ENCODE measurements at regions of chr14 and their contacts with region 1.

Region 1: GRCh38 chr14:81220830-81221578 is at the start of gene GTF2A1:
- DNase-seq: peak; percentile 89 to 94
- H3K4me3 ChIP-seq: peak within 1 kb of the TSS; percentile 90 to 98 (median 94)
- H3K27ac ChIP-seq: peak within 1 kb of the TSS; percentile 99
- H3K4me1 ChIP-seq: peaks cover 0 to 5% (median 0%) of the 10 kb centered on the region in 4 experiments; a peak in 4 of 7 replicates
- H3K27me3 ChIP-seq: no peaks in the 10 kb centered on the region
- CTCF ChIP-seq: no peak
- EP300 ChIP-seq: peak in 1 of 2 experiments; percentile 59; a peak in 1 of 3 replicates
- POLR2A ChIP-seq: peak; percentile 92 to 99
- RAD21 ChIP-seq: no peak
- total RNA-seq, gene GTF2A1: 53.5 and 57.8 TPM in 2 replicates

Region 2: DNA sequence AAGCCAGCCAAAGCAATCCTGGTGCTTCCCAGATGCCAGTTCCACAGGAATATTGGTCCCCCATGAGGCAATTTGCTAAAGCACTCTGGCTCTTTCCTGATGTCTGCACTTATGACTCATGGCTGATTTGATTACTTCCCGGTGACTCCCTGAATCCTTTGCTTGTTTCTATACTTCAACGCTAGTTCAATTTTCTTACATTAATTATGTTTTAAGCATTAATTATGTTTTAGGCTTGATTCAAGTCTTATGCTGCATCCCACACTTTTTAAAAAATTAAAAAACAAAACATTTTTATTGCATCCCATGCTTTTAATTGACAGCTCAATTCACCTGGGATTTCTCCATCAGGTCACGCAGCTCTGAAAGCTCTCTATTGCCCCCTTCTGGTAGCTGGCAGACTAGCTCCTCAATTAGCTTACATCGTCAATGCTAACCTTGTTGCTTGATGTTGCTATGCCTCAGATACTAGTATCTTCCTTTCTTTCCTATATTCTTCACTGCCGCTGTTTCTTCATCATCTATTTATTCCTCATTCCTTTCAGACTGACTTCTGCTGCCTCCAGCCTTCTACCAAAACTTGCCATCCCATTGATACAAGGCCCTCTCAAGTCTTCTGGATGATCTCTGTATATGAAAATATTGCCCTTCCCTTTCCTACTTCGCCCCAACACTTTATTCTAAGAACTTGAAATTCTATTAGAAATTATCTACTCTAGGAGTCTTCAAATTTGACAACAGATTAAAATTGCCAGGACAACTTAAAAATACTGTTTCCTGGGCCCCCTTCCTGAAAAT is 233.6 kb before region 1 on chr14:
- CTCF ChIA-PET with region 1: no interaction called
- POLR2A ChIA-PET with region 1: no interaction called
- DNase-seq: peak; percentile 51 to 77
- H3K4me3 ChIP-seq: no peak overlapping the region
- H3K27ac ChIP-seq: no peak overlapping the region
- H3K4me1 ChIP-seq: no peaks in the 10 kb centered on the region
- H3K27me3 ChIP-seq: no peaks in the 10 kb centered on the region
- CTCF ChIP-seq: peak; percentile 28 to 87 (median 80)
- EP300 ChIP-seq: no peak
- POLR2A ChIP-seq: no peak
- RAD21 ChIP-seq: peak; percentile 82 to 86

Region 3: GRCh38 chr14:81001447-81001846 is 219.6 kb before region 1 on chr14:
- CTCF ChIA-PET with region 1: no interaction called
- POLR2A ChIA-PET with region 1: no interaction called
- DNase-seq: no peak
- H3K4me3 ChIP-seq: no peak overlapping the region
- H3K27ac ChIP-seq: no peak overlapping the region
- H3K4me1 ChIP-seq: no peaks in the 10 kb centered on the region
- H3K27me3 ChIP-seq: no peaks in the 10 kb centered on the region
- CTCF ChIP-seq: no peak
- EP300 ChIP-seq: no peak
- POLR2A ChIP-seq: no peak
- RAD21 ChIP-seq: no peak

Region 4: DNA sequence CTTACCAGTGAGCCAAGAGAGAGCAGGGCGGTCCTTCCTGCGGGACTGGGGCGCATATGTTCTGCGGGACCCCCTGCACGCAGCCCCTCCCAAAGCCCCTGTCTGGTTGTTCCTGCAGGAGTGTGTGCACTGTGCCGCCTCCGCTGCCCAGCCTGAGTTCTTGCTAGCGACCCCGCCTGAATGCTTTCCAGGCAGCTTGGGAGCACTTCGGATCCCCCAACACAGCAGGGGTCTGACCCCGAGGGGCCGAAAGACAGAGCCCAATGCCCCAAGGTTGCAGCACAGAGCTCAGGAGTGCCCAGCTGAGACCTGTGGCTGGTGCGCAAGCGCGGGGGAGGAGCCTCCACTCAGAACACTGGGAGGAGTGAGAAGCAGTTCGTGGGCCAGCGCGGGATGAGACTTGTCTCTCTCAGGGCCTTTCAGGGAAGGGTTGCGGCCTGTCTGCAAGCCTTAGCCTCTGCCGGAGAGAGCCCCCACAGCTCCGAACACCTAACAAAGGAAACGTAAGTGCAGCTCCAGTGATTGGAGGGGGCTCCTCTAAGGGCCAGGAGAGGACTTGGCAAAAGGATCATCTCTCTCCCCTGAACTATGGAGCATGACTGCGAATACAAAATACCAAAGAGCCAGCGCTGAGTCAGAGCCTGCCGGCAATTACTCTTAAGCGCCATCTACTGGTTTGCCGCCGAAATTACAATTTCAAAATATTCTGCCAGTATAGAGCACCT is 50.7 kb before region 1 on chr14:
- CTCF ChIA-PET with region 1: interaction called, 3 read pairs
- POLR2A ChIA-PET with region 1: interaction called, 15 read pairs
- DNase-seq: peak; percentile 43 to 86
- H3K4me3 ChIP-seq: peak overlapping the region; percentile 49 to 85 (median 83)
- H3K27ac ChIP-seq: peak overlapping the region; percentile 85
- H3K4me1 ChIP-seq: peaks cover 0 to 5% (median 0%) of the 10 kb centered on the region in 4 experiments; a peak in 2 of 7 replicates
- H3K27me3 ChIP-seq: no peaks in the 10 kb centered on the region
- CTCF ChIP-seq: peak; percentile 51 to 83 (median 73)
- EP300 ChIP-seq: no peak
- POLR2A ChIP-seq: peak; percentile 54 to 90
- RAD21 ChIP-seq: peak; percentile 58 to 71

Region 5: DNA sequence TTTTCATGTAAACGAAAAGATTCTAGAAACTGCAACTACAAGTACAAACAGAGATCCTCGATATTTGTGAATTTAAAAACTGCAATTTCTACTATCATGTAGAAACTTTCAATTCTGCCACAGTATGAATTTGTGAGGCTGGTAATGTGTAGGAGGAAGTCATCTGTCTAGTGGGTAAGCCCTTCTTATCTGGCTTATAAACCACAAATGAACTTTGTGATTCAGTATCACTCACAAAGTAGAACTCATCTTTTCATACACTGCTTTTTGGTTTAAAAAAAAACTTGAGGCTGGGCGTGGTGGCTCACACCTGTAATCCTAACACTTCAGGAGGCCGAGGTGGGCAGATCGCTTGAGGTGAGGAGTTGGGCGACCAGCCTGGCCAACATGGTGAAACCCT is 20.9 kb before region 1 on chr14:
- CTCF ChIA-PET with region 1: no interaction called
- POLR2A ChIA-PET with region 1: interaction called, 15 read pairs
- DNase-seq: no peak
- H3K4me3 ChIP-seq: no peak overlapping the region
- H3K27ac ChIP-seq: no peak overlapping the region
- H3K4me1 ChIP-seq: no peaks in the 10 kb centered on the region
- H3K27me3 ChIP-seq: no peaks in the 10 kb centered on the region
- CTCF ChIP-seq: no peak
- EP300 ChIP-seq: no peak
- POLR2A ChIP-seq: no peak
- RAD21 ChIP-seq: no peak

Region 6: GRCh38 chr14:81209167-81209836 is 11.7 kb before region 1 on chr14:
- CTCF ChIA-PET with region 1: interaction called, 3 read pairs
- POLR2A ChIA-PET with region 1: interaction called, 12 read pairs
- DNase-seq: no peak
- H3K4me3 ChIP-seq: no peak overlapping the region
- H3K27ac ChIP-seq: no peak overlapping the region
- H3K4me1 ChIP-seq: no peaks in the 10 kb centered on the region; a peak in 2 of 7 replicates
- H3K27me3 ChIP-seq: no peaks in the 10 kb centered on the region
- CTCF ChIP-seq: no peak
- EP300 ChIP-seq: no peak
- POLR2A ChIP-seq: no peak
- RAD21 ChIP-seq: no peak

Region 7: GRCh38 chr14:81234278-81234677 is 13.3 kb after region 1 on chr14:
- CTCF ChIA-PET with region 1: interaction called, 3 read pairs
- POLR2A ChIA-PET with region 1: interaction called, 38 read pairs
- DNase-seq: no peak
- H3K4me3 ChIP-seq: no peak overlapping the region
- H3K27ac ChIP-seq: no peak overlapping the region
- H3K4me1 ChIP-seq: peaks cover 0 to 3% (median 0%) of the 10 kb centered on the region in 4 experiments; a peak in 3 of 7 replicates
- H3K27me3 ChIP-seq: no peaks in the 10 kb centered on the region
- CTCF ChIP-seq: no peak
- EP300 ChIP-seq: no peak
- POLR2A ChIP-seq: no peak
- RAD21 ChIP-seq: no peak

Region 8: GRCh38 chr14:81315341-81315740 is 94.3 kb after region 1 on chr14:
- CTCF ChIA-PET with region 1: no interaction called
- POLR2A ChIA-PET with region 1: interaction called, 10 read pairs
- DNase-seq: peak in 1 of 2 experiments; percentile 31
- H3K4me3 ChIP-seq: peak overlapping the region in 1 of 4 experiments; percentile 27; a peak in 1 of 8 replicates
- H3K27ac ChIP-seq: peak overlapping the region; percentile 90
- H3K4me1 ChIP-seq: peaks cover 6 to 29% (median 23%) of the 10 kb centered on the region in 4 experiments; a peak in 6 of 7 replicates
- H3K27me3 ChIP-seq: no peaks in the 10 kb centered on the region
- CTCF ChIP-seq: no peak
- EP300 ChIP-seq: peak in 1 of 2 experiments; percentile 83; a peak in 1 of 3 replicates
- POLR2A ChIP-seq: peak in 1 of 2 experiments; percentile 50; a peak in 2 of 3 replicates
- RAD21 ChIP-seq: no peak

Region 9: GRCh38 chr14:81436296-81437138 is 215.5 kb after region 1 on chr14:
- CTCF ChIA-PET with region 1: no interaction called
- POLR2A ChIA-PET with region 1: interaction called, 12 read pairs
- DNase-seq: peak in 1 of 2 experiments; percentile 87
- H3K4me3 ChIP-seq: peak overlapping the region; percentile 50 to 86 (median 75)
- H3K27ac ChIP-seq: no peak overlapping the region
- H3K4me1 ChIP-seq: peaks cover 7 to 16% (median 13%) of the 10 kb centered on the region in 4 experiments
- H3K27me3 ChIP-seq: peaks cover 1 to 14% (median 9%) of the 10 kb centered on the region in 4 experiments; a peak in 6 of 7 replicates
- CTCF ChIP-seq: no peak
- EP300 ChIP-seq: no peak
- POLR2A ChIP-seq: no peak
- RAD21 ChIP-seq: no peak

Region 10: GRCh38 chr14:81474148-81474492 is 253.1 kb after region 1 on chr14:
- CTCF ChIA-PET with region 1: no interaction called
- POLR2A ChIA-PET with region 1: no interaction called
- DNase-seq: no peak
- H3K4me3 ChIP-seq: no peak overlapping the region
- H3K27ac ChIP-seq: no peak overlapping the region
- H3K4me1 ChIP-seq: no peaks in the 10 kb centered on the region
- H3K27me3 ChIP-seq: no peaks in the 10 kb centered on the region
- CTCF ChIP-seq: no peak
- EP300 ChIP-seq: no peak
- POLR2A ChIP-seq: no peak
- RAD21 ChIP-seq: no peak

Measured in H1 (cell line).